Psoas muscle (tissue), 8 donors: ENCODE measurements at regions of chr6 and their contacts with region 1.

Region 1: DNA sequence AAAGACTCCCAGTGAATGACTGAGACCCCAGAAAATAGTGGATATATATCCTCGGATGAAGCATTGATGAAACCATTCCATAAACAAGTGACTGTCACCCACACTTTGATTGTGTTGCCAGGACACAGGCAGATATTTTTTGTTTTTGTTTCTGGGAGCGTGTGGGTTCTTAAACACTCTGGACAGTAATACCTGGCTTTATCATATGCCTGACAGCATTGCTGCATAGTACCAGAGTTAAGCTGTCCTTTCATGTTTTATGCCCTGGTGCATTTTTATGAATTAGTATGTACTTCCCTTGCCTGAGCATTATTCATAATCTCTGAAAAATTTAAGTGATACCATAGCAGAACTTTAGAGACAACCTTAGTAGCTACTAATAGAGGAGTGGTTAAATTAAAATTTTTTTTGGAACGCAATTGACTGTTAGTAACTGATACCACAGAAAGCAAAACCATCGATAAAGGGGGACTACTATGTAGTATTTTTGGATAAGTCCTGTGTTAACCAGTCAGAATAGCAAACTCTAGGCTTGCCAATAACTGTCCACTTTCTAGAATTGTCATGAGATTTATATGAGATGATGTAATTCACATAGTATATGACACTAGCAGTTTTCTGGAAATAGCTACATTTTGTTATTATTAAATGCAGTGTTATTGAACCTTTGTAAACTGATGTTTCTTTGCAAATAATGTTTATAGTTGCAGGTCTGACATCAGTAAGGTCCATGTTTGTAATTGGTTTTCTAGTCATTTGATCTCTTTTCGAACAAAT is 30.4 kb downstream of the SENP6 start:
- DNase-seq: no peak
- ATAC-seq: no peak
- H3K4me3 ChIP-seq: no peak overlapping the region
- H3K27ac ChIP-seq: no peak overlapping the region
- H3K4me1 ChIP-seq: peaks cover 9% of the 10 kb centered on the region
- H3K27me3 ChIP-seq: no peaks in the 10 kb centered on the region
- CTCF ChIP-seq: no peak

Region 2: DNA sequence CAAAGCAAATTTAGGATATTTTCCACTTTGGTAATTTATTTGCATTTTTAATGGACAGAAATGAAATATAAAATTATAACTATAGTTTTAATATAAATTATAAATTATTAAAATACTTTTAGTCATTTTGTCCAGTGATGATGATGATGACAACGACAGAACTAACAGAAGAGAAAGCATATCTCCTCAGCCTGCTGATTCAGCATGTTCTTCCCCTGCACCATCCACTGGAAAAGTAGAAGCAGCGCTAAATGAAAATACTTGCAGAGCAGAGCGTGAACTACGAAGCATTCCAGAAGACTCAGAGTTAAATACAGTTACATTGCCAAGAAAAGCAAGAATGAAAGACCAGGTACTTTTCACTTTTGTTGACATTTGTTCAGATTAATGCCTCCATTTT is 34.5 kb after region 1 on chr6:
- intact Hi-C with region 1: loop called in 1 of 2 experiments (anchors 5 kb)
- DNase-seq: no peak
- ATAC-seq: no peak
- H3K4me3 ChIP-seq: no peak overlapping the region
- H3K27ac ChIP-seq: no peak overlapping the region
- H3K4me1 ChIP-seq: no peaks in the 10 kb centered on the region
- H3K27me3 ChIP-seq: no peaks in the 10 kb centered on the region
- CTCF ChIP-seq: no peak